ENCODE measurements at regions of chr22 and their contacts with region 1.

Region 1: GRCh38 chr22:43666457-43666856 is 145.6 kb downstream of the EFCAB6 start:
- DNase-seq: no peak
- H3K4me3 ChIP-seq: no peak overlapping the region
- H3K27ac ChIP-seq: no peak overlapping the region
- H3K4me1 ChIP-seq: no peaks in the 10 kb centered on the region
- H3K27me3 ChIP-seq: no peaks in the 10 kb centered on the region
- CTCF ChIP-seq: no peak
- EP300 ChIP-seq: no peak
- POLR2A ChIP-seq: no peak

Region 2: DNA sequence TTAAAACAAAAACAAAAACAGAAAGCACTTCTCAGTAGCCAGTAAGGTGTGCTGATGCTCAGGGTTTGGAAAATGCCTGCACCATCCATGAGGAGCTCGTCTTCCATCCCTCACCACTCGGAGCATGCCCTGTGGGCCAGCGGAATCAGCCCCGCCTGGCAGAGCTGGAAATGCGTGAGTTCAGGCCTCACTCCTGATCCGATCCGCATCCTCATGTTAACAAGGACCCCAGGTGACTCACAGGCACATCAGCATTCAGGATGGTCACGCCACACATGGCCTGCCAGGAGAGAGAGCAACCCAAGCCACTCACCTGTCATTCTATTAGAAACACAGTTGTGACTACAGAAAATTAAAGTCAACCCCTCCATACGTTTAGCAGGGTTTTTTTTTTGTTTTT is 66.2 kb before region 1 on chr22:
- intact Hi-C with region 1: loop called in 1 of 4 experiments (anchors 10 kb)
- DNase-seq: no peak
- H3K4me3 ChIP-seq: no peak overlapping the region
- H3K27ac ChIP-seq: no peak overlapping the region
- H3K4me1 ChIP-seq: no peaks in the 10 kb centered on the region
- H3K27me3 ChIP-seq: no peaks in the 10 kb centered on the region
- CTCF ChIP-seq: no peak
- EP300 ChIP-seq: no peak
- POLR2A ChIP-seq: no peak

Region 3: GRCh38 chr22:43848366-43849171 is 182.1 kb after region 1 on chr22:
- intact Hi-C with region 1: no loop called
- DNase-seq: peak in 1 of 5 donors; percentile 62
- H3K4me3 ChIP-seq: no peak overlapping the region
- H3K27ac ChIP-seq: no peak overlapping the region
- H3K4me1 ChIP-seq: no peaks in the 10 kb centered on the region
- H3K27me3 ChIP-seq: no peaks in the 10 kb centered on the region
- CTCF ChIP-seq: no peak
- EP300 ChIP-seq: no peak
- POLR2A ChIP-seq: no peak